Left cardiac atrium (tissue), 4 donors: ENCODE measurements at regions of chr5 and their contacts with region 1.

Region 1: DNA sequence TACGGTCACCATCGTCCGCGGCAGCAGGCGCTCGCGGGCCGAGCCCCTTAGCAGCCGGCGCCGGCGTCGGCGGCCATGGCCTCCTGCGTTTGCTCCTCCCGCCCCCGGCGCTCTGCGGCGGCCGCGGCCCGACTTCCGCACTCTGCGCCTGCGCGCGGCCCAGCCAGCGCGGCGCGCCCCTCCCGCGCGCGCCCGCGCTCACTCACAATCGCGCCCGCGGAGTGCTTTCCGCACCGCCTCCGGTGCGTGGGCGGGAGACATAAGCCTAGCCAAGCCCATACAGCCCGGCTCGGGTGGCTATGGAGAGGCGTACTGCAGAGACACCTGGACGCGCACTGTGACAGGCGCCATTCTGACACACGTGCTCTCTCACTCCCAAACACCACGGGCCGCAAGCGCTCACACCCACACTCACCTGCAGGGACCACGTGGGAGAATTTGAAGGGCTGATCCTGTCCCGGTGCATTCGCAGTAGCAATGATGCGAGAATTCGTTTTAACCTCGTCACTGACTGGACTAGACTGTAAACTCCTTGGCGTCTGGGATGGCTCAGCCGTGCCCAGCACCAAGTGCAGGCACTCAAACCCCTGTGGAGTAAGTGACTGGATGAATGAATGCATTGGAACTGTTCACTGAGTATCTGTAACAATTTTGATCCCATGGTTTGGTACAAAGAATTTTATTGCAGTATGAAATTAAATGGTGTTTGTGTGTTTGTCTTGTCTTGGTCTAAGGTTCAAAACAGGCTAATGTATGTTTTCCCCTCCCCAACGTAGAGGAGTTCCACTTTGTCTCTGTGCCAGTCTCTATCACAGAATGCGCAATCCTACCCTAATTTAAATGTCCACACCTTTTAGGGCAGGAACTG is at the start of gene RNF145:
- DNase-seq: peak; percentile 95
- ATAC-seq: peak; percentile 78 to 91
- total RNA-seq, gene RNF145: 28.3 to 30.4 TPM

Region 2: DNA sequence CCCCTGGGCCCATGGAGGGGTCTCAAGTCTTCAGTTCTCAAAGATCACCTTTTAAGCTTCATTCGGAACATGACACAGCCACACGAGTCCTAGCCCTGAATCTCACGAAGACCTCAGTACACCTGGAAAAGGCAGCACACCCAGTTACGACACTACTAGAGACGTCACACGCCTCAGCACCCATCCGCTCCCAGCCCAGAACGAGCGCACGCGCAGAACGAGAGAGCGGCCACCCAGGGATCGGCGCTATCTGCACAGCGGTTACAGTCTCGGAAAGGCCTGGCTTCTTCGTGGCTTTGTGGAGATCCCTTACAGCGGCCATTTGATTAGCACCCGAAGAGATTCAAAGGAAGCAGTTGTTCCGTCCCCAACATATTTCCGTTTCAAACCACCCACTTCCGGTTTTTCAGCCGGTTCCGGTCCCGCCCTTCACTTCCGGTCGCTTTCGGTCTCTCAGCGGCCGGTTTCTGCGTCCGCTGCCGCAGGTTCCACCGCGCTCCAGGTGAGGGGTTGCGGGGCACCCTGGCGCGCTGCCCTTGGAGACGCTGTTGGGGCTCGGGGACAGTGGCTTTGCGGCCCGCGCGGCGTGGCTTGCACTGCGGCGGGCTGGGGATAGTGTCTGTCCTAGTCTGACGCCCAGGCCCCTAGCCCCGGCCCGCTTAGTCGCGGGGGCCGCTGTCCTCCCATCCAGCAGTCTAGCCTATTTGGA is 53.3 kb after region 1 on chr5 and contains the start of gene UBLCP1:
- intact Hi-C with region 1: loop called in 1 of 2 experiments (anchors 2 kb)
- DNase-seq: peak; percentile 85
- ATAC-seq: peak; percentile 94 to 96
- total RNA-seq, gene UBLCP1: 13.6 to 15.5 TPM